Tibial artery (tissue), 4 donors: ENCODE measurements at regions of chr4 and their contacts with region 1.

Region 1: GRCh38 chr4:47926639-47927258 is 12.4 kb upstream of the NFXL1 start:
- DNase-seq: peak in 1 of 2 donors; percentile 30
- H3K4me3 ChIP-seq: no peak overlapping the region
- H3K27ac ChIP-seq: no peak overlapping the region
- H3K4me1 ChIP-seq: peaks cover 0 to 7% (median 7%) of the 10 kb centered on the region in 4 donors
- H3K27me3 ChIP-seq: peaks cover 0 to 10% of the 10 kb centered on the region in 2 donors
- CTCF ChIP-seq: peak in 1 of 2 experiments; percentile 62

Region 2: GRCh38 chr4:47824840-47825239 is 101.9 kb before region 1 on chr4:
- intact Hi-C with region 1: no loop called
- DNase-seq: no peak
- H3K4me3 ChIP-seq: no peak overlapping the region
- H3K27ac ChIP-seq: no peak overlapping the region
- H3K4me1 ChIP-seq: no peaks in the 10 kb centered on the region
- H3K27me3 ChIP-seq: no peaks in the 10 kb centered on the region
- CTCF ChIP-seq: no peak

Region 3: GRCh38 chr4:48079972-48080391 is 153.2 kb after region 1 on chr4:
- intact Hi-C with region 1: loop called (anchors 10 kb)
- DNase-seq: no peak
- H3K4me3 ChIP-seq: no peak overlapping the region
- H3K27ac ChIP-seq: no peak overlapping the region
- H3K4me1 ChIP-seq: no peaks in the 10 kb centered on the region
- H3K27me3 ChIP-seq: no peaks in the 10 kb centered on the region
- CTCF ChIP-seq: no peak